ENCODE measurements at regions of chr1 and their contacts with region 1.

Region 1: DNA sequence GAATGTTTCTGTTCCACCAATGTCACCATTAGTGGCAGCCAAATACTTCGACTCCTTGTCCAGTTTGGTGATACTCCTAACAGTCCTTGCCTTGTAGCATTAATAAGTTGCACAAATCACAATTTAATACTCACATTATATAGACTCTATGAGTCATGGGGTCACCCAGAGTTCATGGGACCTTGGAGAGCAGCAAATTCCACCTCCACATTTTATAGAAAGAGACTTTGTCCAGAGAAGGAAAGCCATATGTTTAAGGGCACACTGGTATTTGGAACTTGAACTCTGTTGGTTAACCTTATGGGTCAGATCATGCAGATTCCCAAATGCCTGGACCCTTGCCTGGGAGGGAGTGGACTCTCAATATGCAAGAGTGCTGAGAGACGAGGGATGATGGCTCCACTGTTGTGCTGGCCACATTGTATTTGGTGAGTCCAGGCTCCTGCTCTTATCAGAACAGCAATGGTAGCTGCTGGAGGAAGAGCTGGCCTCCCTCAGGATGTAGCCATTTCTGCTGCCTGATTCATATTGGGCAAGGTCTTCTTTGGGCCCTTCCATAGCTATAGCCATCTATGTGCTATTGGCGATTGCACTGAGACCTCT is 30.6 kb downstream of the DNAJC6 start:
- DNase-seq: peak; percentile 55
- H3K4me3 Mint-ChIP-seq: no peak overlapping the region
- H3K27ac Mint-ChIP-seq: no peak overlapping the region
- H3K4me1 Mint-ChIP-seq: peaks cover 23% of the 10 kb centered on the region
- H3K27me3 Mint-ChIP-seq: no peaks in the 10 kb centered on the region
- CTCF ChIP-seq: no peak

Region 2: DNA sequence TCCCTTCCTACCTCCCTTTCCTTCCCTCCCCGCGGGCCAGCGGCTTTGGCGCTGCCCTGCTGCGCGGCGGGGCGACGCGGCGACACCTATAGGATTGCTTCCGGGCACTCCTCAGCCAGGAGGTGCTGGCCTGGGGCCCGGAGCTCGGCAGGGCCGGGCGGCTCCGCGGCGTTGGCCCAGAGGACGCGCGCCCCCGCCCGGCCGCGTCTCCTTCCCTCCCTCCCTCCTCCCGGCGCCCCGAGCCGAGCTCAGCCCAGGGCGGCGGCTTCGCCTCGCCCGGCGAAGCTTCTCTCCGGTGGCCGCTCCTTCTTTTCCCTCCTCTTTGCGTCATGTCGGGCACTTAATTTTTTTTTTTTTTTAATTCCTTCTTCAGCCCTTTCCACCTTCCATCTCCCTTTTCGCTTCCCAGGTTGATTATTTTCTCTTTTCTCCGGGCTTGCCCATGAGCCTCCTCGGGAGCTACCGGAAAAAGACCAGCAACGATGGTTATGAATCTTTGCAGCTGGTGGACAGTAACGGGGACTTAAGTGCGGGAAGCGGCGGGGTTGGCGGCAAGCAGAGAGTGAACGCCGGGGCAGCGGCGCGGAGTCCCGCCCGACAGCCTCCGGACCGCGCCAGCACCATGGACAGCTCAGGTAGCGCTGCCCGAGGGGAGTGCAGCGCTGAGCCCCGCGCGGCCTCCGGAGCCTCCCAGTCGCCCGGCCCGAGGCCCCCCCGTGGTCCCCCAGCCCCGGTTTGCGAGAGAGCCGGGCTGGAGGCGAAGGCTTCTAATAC is 30.5 kb before region 1 on chr1 and contains the start of gene DNAJC6:
- CTCF ChIA-PET with region 1: interaction called, 3 read pairs
- POLR2A ChIA-PET with region 1: interaction called, 3 read pairs
- intact Hi-C with region 1: loop called (anchors 2 kb)
- DNase-seq: peak; percentile 69
- H3K4me3 Mint-ChIP-seq: peak within 1 kb of the TSS; percentile 82
- H3K27ac Mint-ChIP-seq: no peak within 1 kb of the TSS
- H3K4me1 Mint-ChIP-seq: no peaks in the 10 kb centered on the region
- H3K27me3 Mint-ChIP-seq: no peaks in the 10 kb centered on the region
- CTCF ChIP-seq: no peak
- total RNA-seq, gene DNAJC6: 7.9 and 8.4 TPM in 2 replicates

Region 3: DNA sequence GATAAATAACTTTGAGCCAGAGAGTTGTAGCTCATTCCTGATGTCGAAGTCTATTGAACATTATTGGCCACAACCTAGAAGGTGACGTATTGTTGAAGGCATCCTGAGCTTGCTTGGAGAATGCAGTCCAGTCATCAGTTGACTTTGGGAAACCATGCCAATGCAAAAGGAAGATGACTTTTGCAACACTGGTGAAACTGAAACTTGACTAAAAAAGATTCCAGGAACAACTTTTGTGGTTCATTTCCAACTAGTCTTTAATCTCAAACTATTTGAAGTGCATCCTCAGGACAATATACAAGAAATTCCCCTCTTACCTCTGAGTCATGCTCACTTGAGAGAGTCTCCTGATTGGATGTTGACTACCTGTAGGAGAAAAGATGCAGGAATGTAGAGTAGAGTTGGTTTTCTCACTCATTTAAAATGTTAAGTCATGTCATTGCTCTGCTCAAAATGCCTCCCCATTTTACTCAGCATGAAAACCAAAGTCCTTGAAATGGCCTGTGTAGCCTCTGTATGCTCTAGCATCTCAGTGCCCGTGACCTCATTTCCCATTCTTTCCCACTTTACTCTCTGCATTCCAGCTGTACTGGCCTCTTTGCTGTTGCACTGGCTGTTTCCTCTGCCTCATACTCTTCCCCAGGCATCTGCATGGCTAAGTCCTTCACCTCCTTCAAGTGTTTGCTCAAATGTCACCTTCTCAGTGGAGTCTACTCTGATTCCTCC is 56.1 kb after region 1 on chr1:
- CTCF ChIA-PET with region 1: no interaction called
- POLR2A ChIA-PET with region 1: no interaction called
- intact Hi-C with region 1: loop called (anchors 5 kb)
- DNase-seq: peak; percentile 77
- H3K4me3 Mint-ChIP-seq: no peak overlapping the region
- H3K27ac Mint-ChIP-seq: no peak overlapping the region
- H3K4me1 Mint-ChIP-seq: peaks cover 21% of the 10 kb centered on the region
- H3K27me3 Mint-ChIP-seq: no peaks in the 10 kb centered on the region
- CTCF ChIP-seq: no peak